ENCODE measurements at regions of chr1 and their contacts with region 1.

Region 1: DNA sequence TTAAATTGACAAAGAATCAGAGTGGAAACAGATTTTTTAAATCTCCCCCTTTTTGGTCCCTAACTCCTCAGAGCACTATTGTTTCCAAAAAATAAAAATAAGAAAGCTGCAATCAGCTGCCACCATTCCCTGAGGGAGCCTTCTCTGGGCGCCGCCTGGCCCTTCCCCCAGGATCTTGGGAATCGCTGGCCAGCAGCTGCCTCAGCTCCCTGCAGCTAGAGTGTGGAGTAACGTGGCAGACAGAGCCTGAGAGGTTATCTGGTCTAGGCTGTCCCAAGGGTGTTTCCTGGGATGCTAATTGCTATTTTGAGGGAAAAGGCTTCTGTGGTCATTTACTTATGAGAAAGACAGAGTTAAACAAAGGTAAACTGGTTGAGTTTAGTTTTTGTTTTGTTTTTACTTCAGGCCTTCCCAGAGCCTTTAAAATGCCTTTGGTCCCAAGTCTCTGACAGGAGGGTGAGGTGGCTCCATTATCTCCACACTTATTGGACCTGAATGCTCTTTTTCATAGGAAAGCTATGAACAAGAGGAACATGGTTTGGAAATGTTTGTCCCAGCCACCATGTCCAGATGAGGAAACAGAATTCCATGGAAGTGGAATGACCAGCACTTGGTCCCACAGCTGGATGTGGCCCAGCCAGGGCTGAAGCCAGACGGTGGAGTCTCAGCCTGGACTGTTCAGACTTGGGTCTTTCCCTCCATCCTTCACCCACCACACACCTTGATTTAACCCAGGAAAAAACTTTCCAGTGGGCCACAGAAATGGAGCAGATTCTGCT is 14.1 kb upstream of the KIAA1614 start:
- DNase-seq: peak in 1 of 2 experiments; percentile 47
- H3K4me3 ChIP-seq: no peak overlapping the region
- H3K27ac ChIP-seq: no peak overlapping the region
- H3K4me1 ChIP-seq: peaks cover 0 to 15% (median 6%) of the 10 kb centered on the region in 4 experiments; a peak in 4 of 7 replicates
- H3K27me3 ChIP-seq: peaks cover 0 to 3% (median 0%) of the 10 kb centered on the region in 4 experiments; a peak in 2 of 7 replicates
- CTCF ChIP-seq: no peak
- EP300 ChIP-seq: no peak
- POLR2A ChIP-seq: no peak
- RAD21 ChIP-seq: no peak; a peak in 1 of 4 replicates

Region 2: GRCh38 chr1:180720753-180721152 is 177.9 kb before region 1 on chr1:
- CTCF ChIA-PET with region 1: no interaction called
- POLR2A ChIA-PET with region 1: no interaction called
- DNase-seq: no peak
- H3K4me3 ChIP-seq: no peak overlapping the region
- H3K27ac ChIP-seq: no peak overlapping the region
- H3K4me1 ChIP-seq: no peaks in the 10 kb centered on the region
- H3K27me3 ChIP-seq: no peaks in the 10 kb centered on the region
- CTCF ChIP-seq: no peak
- EP300 ChIP-seq: no peak
- POLR2A ChIP-seq: no peak
- RAD21 ChIP-seq: no peak

Region 3: GRCh38 chr1:180881806-180882509 is 16.7 kb before region 1 on chr1:
- CTCF ChIA-PET with region 1: interaction called, 43 read pairs
- POLR2A ChIA-PET with region 1: no interaction called
- DNase-seq: no peak
- H3K4me3 ChIP-seq: no peak overlapping the region
- H3K27ac ChIP-seq: no peak overlapping the region
- H3K4me1 ChIP-seq: no peaks in the 10 kb centered on the region
- H3K27me3 ChIP-seq: no peaks in the 10 kb centered on the region
- CTCF ChIP-seq: peak in 2 of 3 experiments; percentile 48 to 56; a peak in 2 of 4 replicates
- EP300 ChIP-seq: no peak
- POLR2A ChIP-seq: no peak
- RAD21 ChIP-seq: peak; percentile 71 to 79

Region 4: DNA sequence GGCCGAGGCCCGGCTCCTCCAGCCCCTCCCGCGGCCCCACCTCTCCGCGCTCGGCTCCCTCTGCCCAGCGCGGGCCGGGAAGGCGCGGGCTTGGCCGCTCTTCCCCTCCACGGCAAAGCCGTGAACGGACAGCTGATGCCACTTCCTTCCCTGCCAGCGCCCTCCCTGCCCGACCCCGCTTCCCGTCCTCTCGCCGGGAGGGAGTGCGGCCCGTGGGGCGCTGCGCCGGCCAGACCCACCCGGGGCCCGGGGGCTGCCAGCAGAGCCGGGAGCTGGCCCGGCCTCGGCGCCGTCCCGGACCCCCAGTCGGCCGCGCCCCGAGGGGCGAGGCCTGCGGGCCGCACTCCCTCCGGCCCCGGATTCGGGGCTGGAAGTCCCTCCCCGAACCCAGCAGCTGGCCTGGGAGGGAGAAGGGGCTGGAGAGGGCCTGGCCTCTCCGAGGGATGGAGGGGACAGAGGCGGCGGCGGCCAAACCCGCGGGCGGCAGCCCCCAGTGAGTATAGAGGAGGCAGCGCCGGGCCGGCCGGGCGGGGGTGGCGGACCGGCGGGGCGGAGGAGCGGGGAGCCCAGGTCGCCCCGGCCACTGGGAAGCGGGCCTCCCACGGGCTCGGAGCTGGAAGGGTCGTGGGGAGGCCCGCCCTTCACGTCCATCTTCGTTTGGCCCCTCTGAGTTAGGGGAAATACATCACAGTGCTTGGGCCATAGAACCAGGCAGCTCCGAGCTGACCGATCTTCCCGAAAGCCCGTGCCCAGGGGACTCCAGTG is 14.4 kb after region 1 on chr1 and contains the start of gene KIAA1614:
- CTCF ChIA-PET with region 1: interaction called, 25 read pairs
- POLR2A ChIA-PET with region 1: interaction called, 50 read pairs
- DNase-seq: peak in 1 of 2 experiments; percentile 79
- H3K4me3 ChIP-seq: peak within 1 kb of the TSS; percentile 60 to 80 (median 64)
- H3K27ac ChIP-seq: peak within 1 kb of the TSS; percentile 54
- H3K4me1 ChIP-seq: peaks cover 0 to 8% (median 3%) of the 10 kb centered on the region in 4 experiments; a peak in 6 of 7 replicates
- H3K27me3 ChIP-seq: peaks cover 0 to 3% (median under 1%) of the 10 kb centered on the region in 4 experiments; a peak in 5 of 7 replicates
- CTCF ChIP-seq: no peak
- EP300 ChIP-seq: no peak
- POLR2A ChIP-seq: no peak; a peak in 1 of 3 replicates
- RAD21 ChIP-seq: no peak; a peak in 1 of 4 replicates
- total RNA-seq, gene KIAA1614: 2.6 and 3.1 TPM in 2 replicates

Region 5: GRCh38 chr1:180920702-180921101 is 22.1 kb after region 1 on chr1:
- CTCF ChIA-PET with region 1: interaction called, 25 read pairs
- POLR2A ChIA-PET with region 1: interaction called, 3 read pairs
- DNase-seq: no peak
- H3K4me3 ChIP-seq: no peak overlapping the region
- H3K27ac ChIP-seq: no peak overlapping the region
- H3K4me1 ChIP-seq: peaks cover 24 to 37% (median 33%) of the 10 kb centered on the region in 4 experiments
- H3K27me3 ChIP-seq: no peaks in the 10 kb centered on the region; a peak in 1 of 7 replicates
- CTCF ChIP-seq: peak; percentile 37 to 60 (median 48); a peak in 3 of 4 replicates
- EP300 ChIP-seq: no peak
- POLR2A ChIP-seq: no peak
- RAD21 ChIP-seq: peak; percentile 45 to 59; a peak in 3 of 4 replicates

Region 6: GRCh38 chr1:181057079-181057478 is 158.4 kb after region 1 on chr1:
- CTCF ChIA-PET with region 1: no interaction called
- POLR2A ChIA-PET with region 1: no interaction called
- DNase-seq: no peak
- H3K4me3 ChIP-seq: no peak overlapping the region
- H3K27ac ChIP-seq: no peak overlapping the region
- H3K4me1 ChIP-seq: no peaks in the 10 kb centered on the region; a peak in 1 of 7 replicates
- H3K27me3 ChIP-seq: no peaks in the 10 kb centered on the region
- CTCF ChIP-seq: no peak
- EP300 ChIP-seq: no peak
- POLR2A ChIP-seq: no peak
- RAD21 ChIP-seq: no peak

Measured in H1 (cell line).